Activated naive CD4-positive, alpha-beta T cell treated with anti-CD3 and anti-CD28 coated beads for 36 hours (primary cell): ENCODE measurements at regions of chr4 and their contacts with region 1.

Region 1: DNA sequence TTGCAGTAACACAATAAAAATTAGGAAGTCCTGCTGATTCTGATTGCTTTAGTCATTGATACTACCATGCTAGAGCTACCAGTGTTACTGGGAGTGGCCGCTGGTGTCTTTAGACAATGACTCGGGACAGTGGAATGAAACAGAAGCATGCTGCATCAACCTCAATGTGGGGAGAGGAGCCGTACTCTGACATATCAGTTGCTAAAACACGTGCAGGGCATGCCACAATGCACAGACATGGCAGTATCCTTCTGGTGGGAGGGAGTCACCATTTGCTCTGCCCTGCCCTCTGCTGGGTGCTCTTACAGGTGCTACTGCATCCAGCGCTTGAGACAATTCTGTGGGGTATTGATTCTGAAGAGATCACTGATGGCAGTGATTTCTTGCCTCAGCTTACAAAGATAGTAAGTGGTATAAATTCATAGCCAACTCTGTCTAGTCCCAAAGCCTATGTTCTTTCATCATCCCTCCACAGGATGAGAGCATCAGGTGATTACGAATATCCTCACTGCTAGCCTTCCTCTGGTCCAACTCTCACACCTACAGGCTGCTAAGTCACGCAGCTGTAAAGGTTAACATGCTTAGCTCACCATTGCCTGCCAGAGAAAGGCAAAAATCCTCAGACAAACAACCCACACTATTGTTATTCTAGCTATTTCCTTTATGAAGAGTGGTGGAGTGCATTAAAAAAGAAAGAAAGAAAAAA is 43.7 kb downstream of the NSG1 start:
- DNase-seq: peak; percentile 69
- H3K4me3 Mint-ChIP-seq: no peak overlapping the region
- H3K27ac Mint-ChIP-seq: no peak overlapping the region
- H3K4me1 Mint-ChIP-seq: peaks cover 5% of the 10 kb centered on the region
- H3K27me3 Mint-ChIP-seq: no peaks in the 10 kb centered on the region

Region 2: GRCh38 chr4:4260253-4260652 is 170.4 kb before region 1 on chr4:
- CTCF ChIA-PET with region 1: interaction called, 4 read pairs
- intact Hi-C with region 1: loop called (anchors 1 kb)
- DNase-seq: no peak
- H3K4me3 Mint-ChIP-seq: no peak overlapping the region
- H3K27ac Mint-ChIP-seq: no peak overlapping the region
- H3K4me1 Mint-ChIP-seq: no peaks in the 10 kb centered on the region
- H3K27me3 Mint-ChIP-seq: no peaks in the 10 kb centered on the region

Region 3: GRCh38 chr4:4386736-4387392 is 43.8 kb before region 1 on chr4 and contains the start of gene NSG1:
- CTCF ChIA-PET with region 1: interaction called, 5 read pairs
- intact Hi-C with region 1: loop called (anchors 1 kb)
- DNase-seq: peak; percentile 42
- H3K4me3 Mint-ChIP-seq: peak within 1 kb of the TSS; percentile 72
- H3K27ac Mint-ChIP-seq: no peak within 1 kb of the TSS
- H3K4me1 Mint-ChIP-seq: peaks cover 12% of the 10 kb centered on the region
- H3K27me3 Mint-ChIP-seq: peaks cover 22% of the 10 kb centered on the region
- total RNA-seq, gene NSG1: 1.9 to 2.1 TPM

Region 4: GRCh38 chr4:4420421-4420820 is 10.2 kb before region 1 on chr4:
- CTCF ChIA-PET with region 1: interaction called, 10 read pairs
- intact Hi-C with region 1: no loop called
- DNase-seq: no peak
- H3K4me3 Mint-ChIP-seq: no peak overlapping the region
- H3K27ac Mint-ChIP-seq: no peak overlapping the region
- H3K4me1 Mint-ChIP-seq: peaks cover 26% of the 10 kb centered on the region
- H3K27me3 Mint-ChIP-seq: no peaks in the 10 kb centered on the region

Region 5: DNA sequence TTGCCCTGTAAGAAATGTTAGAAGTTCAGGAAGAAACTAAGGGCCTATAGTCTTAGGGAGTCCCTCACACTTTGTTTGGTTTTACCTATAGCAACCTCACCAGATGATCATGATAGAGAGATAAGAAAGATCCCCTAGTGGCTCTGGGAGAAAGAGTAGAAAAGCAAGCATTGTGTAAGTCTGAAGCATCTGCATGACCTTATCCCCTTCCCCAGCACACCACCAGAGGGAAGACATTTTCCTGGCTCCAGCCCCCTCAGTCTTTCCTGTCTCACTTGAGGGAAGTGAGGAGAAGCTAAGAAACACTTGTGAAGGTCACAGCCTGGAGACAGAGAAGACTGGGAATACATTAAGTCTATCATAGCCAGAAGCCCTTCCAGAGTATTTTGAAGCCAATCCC is 1123.7 kb after region 1 on chr4:
- CTCF ChIA-PET with region 1: no interaction called
- intact Hi-C with region 1: no loop called
- DNase-seq: no peak
- H3K4me3 Mint-ChIP-seq: no peak overlapping the region
- H3K27ac Mint-ChIP-seq: no peak overlapping the region
- H3K4me1 Mint-ChIP-seq: no peaks in the 10 kb centered on the region
- H3K27me3 Mint-ChIP-seq: peaks cover 10% of the 10 kb centered on the region